Activated CD4-positive, alpha-beta T cell treated with anti-CD3 and anti-CD28 coated beads, Interleukin-2, amount 10 ng/mL, durations not matched to agents 24 days and 14 days (primary cell): ENCODE measurements at regions of chr17 and their contacts with region 1.

Region 1: DNA sequence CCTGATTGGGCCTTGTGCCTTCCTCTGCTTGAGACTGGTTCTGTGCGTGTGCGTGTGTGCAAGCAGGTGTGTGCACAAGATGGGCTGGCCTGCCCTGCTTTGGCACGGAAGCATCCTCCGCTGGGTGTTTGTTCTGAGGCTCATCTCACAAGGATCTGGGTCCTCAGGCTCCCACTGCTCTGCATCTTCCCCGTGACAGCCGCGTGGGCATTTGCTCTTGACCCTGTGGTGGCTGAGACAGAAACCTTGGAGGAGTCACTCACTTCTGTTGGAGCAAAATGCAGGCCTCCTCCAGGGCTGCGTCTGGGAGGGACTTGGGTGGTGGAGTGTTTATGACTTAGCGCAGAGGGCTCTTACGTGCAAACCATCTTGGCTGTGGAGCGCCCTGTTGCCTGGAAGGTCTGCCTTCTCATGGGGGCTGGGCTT is 119.2 kb downstream of the RPTOR start:
- DNase-seq: peak; percentile 84
- H3K4me3 Mint-ChIP-seq: peak overlapping the region; percentile 68
- H3K27ac Mint-ChIP-seq: peak overlapping the region; percentile 89
- H3K4me1 Mint-ChIP-seq: peaks cover 68% of the 10 kb centered on the region
- H3K27me3 Mint-ChIP-seq: no peaks in the 10 kb centered on the region

Region 2: DNA sequence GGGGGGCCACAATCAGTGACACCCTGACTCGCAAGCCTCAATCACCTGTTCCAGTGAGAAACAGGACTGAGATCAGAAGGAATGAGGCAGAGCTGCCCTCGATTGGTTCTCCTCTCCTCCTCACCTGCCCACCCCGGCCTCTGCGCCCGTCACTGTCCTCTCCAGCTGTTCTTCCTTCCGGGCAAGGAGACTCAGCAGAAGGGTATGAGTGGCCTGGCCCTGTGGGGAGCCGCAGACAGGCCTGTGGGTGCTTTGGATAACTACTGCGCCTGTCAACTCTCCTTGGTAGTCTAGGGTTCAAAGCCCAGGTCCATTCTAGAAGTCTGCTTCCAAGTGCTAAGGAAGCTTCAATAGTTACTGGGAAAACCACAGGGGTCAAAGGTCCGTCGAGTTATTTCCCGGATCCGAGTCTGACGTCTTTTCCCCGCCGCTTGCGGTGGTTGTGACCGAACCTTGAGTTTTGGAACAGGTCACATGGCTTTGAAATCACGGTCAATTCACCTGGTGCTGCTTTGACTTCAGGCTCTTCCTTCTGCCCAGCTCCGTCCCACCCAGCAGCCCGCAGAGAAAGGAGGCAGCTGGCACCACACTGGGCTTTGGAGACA is 485.7 kb before region 1 on chr17:
- intact Hi-C with region 1: no loop called
- DNase-seq: no peak
- H3K4me3 Mint-ChIP-seq: no peak overlapping the region
- H3K27ac Mint-ChIP-seq: no peak overlapping the region
- H3K4me1 Mint-ChIP-seq: no peaks in the 10 kb centered on the region
- H3K27me3 Mint-ChIP-seq: no peaks in the 10 kb centered on the region

Region 3: DNA sequence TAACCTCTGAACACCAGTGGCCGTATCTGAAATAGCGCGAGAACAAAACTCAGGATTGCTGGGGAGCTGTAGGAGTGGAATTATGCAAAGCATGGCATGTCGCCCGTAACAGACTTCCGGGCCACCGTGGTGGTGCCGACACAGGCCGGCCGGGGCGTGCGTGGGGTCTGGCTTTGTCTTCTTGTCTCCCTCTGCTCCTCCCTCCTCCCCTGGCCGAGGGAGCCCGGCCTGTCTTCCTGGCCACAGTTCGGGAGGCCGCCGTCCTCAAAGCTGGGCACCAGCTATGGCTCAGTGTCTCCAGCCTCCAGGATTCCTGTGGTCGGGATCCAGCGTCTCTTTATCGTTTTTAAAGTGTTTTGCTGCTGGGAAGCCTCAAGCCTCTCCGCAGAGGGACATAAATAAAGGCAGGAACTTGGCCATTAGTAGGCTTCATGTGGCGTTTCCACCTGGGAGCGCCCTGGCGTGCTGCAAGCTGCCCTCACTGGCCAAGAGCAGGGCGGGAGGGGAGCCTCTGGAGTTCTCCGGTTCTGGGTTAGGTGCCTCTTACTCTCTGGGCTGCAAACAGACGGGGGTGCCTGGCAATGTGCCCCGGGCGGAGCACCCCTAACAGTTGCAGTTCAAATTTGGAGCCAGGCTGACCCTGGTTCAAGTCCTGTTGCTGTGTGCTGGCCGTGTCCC is 165.4 kb before region 1 on chr17:
- intact Hi-C with region 1: no loop called
- DNase-seq: no peak
- H3K4me3 Mint-ChIP-seq: no peak overlapping the region
- H3K27ac Mint-ChIP-seq: no peak overlapping the region
- H3K4me1 Mint-ChIP-seq: peaks cover 4% of the 10 kb centered on the region
- H3K27me3 Mint-ChIP-seq: peaks cover 12% of the 10 kb centered on the region

Region 4: DNA sequence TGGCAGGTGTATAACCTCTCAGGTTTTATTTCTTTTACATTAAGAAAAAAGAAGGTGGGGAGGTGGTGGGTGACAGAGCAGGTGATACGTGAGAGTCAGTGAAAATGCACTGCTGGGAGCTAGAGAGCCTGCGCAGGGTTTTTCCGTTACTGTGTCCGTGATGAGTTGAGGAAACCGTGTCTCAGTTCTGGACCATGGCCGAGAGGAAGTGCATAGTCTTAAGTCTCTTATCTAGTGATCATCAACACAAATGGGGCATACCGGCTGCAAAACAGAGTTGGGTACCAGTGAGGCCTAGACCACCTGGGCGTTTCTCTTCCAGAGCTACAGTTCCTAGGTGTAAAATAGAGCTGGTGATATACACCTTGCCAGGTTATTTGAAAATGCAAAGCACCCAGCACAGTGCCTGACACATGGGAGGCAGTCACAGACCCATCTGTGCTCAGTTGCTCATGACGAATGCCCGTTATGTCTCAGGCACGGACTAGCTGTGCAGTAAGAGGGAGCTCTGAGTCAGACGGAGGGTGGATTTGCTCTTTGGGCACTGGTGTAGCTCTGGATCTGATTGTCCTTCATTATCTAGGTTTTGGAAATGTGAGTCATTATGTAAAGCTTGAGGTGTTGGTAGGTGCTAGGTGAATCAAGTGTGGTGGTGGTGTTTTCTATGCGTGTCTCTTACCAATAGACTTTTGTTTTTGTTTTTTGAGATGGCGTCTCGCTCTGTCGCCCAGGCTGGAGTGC is 58.3 kb before region 1 on chr17:
- intact Hi-C with region 1: loop called (anchors 2 kb)
- DNase-seq: peak; percentile 74
- H3K4me3 Mint-ChIP-seq: peak overlapping the region; percentile 17
- H3K27ac Mint-ChIP-seq: peak overlapping the region; percentile 86
- H3K4me1 Mint-ChIP-seq: peaks cover 56% of the 10 kb centered on the region
- H3K27me3 Mint-ChIP-seq: no peaks in the 10 kb centered on the region

Region 5: GRCh38 chr17:80632046-80632581 is 31.7 kb before region 1 on chr17:
- intact Hi-C with region 1: no loop called
- DNase-seq: no peak
- H3K4me3 Mint-ChIP-seq: no peak overlapping the region
- H3K27ac Mint-ChIP-seq: no peak overlapping the region
- H3K4me1 Mint-ChIP-seq: peaks cover 26% of the 10 kb centered on the region
- H3K27me3 Mint-ChIP-seq: no peaks in the 10 kb centered on the region

Region 6: DNA sequence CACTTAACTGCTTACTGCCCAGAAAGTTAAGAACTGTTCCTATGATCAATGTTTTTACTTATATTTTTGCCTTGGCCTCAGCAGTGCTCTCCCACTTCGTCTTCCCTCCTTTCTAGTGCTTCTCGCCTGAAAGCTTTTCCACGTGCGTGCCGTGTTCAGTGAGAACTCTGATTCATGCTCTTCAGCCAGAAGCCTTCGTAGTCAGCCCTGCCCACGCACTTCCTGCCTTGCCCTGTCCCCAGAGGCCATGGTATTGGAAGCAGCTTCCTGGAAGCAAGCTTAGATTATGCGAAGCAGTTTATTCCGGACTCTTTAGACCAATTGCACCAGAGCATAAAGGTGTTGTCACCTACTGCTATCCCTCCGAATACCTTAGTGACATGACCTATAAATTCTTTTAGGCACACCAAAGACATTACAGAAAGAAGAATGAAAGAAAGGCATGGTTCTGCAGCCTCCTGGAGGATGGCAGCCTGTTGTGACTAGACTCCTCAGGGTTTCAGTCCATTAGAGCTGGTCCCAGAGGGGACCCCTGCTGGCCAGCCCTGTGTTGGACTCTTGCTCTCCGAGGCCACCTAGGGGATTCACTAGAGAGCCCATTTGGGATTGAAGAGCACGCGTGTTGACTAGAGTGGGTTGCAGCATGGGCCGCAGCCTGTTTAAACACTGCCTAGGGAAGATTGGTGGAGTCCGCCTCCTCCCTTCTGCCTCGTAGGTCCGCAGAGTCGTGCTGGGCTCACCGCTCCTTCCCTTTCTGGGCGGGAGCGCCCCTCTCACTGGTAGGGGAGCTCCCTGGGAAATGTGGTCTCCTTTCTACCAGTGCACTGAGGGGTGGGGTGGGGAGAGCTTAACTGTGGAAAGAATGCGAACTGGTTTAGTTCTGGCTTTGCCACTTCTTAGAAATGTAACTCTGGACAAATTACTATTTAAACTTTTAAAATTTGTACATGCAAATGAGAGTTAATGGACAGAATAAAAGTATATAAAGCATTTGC is 13.8 kb before region 1 on chr17:
- intact Hi-C with region 1: loop called (anchors 2 kb)
- DNase-seq: peak; percentile 89
- H3K4me3 Mint-ChIP-seq: peak overlapping the region; percentile 63
- H3K27ac Mint-ChIP-seq: peak overlapping the region; percentile 89
- H3K4me1 Mint-ChIP-seq: peaks cover 64% of the 10 kb centered on the region
- H3K27me3 Mint-ChIP-seq: no peaks in the 10 kb centered on the region

Region 7: GRCh38 chr17:80704381-80704819 is 40.6 kb after region 1 on chr17:
- intact Hi-C with region 1: loop called (anchors 5 kb)
- DNase-seq: no peak
- H3K4me3 Mint-ChIP-seq: peak overlapping the region; percentile 35
- H3K27ac Mint-ChIP-seq: peak overlapping the region; percentile 80
- H3K4me1 Mint-ChIP-seq: peaks cover 69% of the 10 kb centered on the region
- H3K27me3 Mint-ChIP-seq: no peaks in the 10 kb centered on the region